Activated CD4-positive, alpha-beta T cell treated with anti-CD3 and anti-CD28 coated beads, Interleukin-2, amount 10 ng/mL, durations not matched to agents 24 days and 14 days (primary cell): ENCODE measurements at regions of chr3 and their contacts with region 1.

Region 1: DNA sequence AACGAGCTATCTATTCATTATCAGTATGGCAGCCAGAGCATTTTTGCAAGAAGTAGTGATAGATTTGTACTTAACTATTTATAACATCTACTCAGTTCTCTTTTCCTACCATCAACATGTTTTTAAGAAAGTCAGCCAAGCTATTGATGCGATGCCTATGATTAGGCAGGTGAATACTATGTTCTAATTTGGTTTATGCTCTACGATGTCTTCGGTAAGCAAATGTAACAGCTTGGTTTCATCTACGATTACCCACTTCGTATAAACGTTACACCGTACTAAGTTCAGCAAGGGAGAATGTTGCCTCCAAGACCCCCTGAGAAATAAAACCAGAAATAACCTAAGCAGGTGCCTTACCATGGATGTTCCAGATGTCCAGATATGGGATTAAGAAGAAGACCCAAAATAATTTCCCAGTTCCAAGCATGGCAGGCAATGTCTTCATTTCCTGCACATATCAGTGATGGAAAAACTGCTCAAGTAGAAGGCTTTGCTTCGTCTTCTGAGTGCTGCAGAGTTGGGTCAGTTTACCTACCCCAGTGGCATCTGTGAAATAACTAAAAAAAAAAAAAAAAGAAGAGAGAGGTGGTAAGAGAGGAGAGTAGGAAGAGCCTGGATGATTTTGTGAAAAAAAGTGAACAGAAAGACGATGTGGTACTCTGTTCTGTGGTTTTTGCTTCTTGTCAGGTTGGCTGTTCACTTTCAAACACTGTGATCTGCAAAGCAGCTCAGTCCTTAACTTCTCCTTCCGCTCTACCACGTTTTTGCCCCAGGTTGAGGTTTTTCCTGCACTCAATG is at the start of gene BTLA:
- DNase-seq: peak; percentile 81
- H3K4me3 Mint-ChIP-seq: peak within 1 kb of the TSS; percentile 97
- H3K27ac Mint-ChIP-seq: peak within 1 kb of the TSS; percentile 94
- H3K4me1 Mint-ChIP-seq: peaks cover 50% of the 10 kb centered on the region
- H3K27me3 Mint-ChIP-seq: no peaks in the 10 kb centered on the region
- total RNA-seq, gene BTLA: 33.7 and 36.0 TPM in 2 replicates

Region 2: GRCh38 chr3:112333002-112333380 is 166.1 kb before region 1 on chr3 and contains the start of gene CD200:
- intact Hi-C with region 1: loop called (anchors 1 kb)
- DNase-seq: peak; percentile 87
- H3K4me3 Mint-ChIP-seq: peak within 1 kb of the TSS; percentile 90
- H3K27ac Mint-ChIP-seq: peak within 1 kb of the TSS; percentile 84
- H3K4me1 Mint-ChIP-seq: peaks cover 44% of the 10 kb centered on the region
- H3K27me3 Mint-ChIP-seq: no peaks in the 10 kb centered on the region
- total RNA-seq, gene CD200: 144 and 151 TPM in 2 replicates

Region 3: GRCh38 chr3:112390783-112391641 is 108.1 kb before region 1 on chr3:
- intact Hi-C with region 1: no loop called
- DNase-seq: peak; percentile 73
- H3K4me3 Mint-ChIP-seq: peak overlapping the region; percentile 36
- H3K27ac Mint-ChIP-seq: peak overlapping the region; percentile 79
- H3K4me1 Mint-ChIP-seq: peaks cover 44% of the 10 kb centered on the region
- H3K27me3 Mint-ChIP-seq: no peaks in the 10 kb centered on the region

Region 4: DNA sequence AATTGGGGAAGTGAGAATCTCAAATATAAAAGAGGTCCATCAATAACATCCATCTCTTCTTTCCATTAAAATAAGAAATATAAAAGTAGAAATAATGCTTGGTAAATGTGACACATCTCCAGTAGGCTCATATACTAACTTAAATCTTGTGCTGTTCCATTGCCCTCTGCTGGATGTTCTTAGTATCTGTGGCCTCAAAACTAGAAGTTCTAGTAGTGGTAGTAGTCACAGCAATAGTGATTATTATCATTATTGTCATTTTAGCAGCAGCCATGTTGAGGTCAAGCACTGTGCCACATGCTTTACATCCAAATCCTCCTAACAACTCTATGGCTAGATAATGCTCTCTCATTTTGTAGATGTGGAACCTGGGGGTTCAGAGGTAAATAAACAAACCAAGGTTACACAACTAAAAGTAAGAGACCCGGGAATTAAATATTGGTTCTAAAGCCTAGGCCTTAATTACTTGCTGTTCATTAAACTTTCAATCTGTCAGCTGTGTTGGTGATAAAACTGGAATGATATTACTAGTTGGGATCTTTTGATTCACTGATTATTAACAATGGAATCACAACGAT is 20.4 kb after region 1 on chr3:
- intact Hi-C with region 1: loop called (anchors 1 kb)
- DNase-seq: peak; percentile 83
- H3K4me3 Mint-ChIP-seq: no peak overlapping the region
- H3K27ac Mint-ChIP-seq: no peak overlapping the region
- H3K4me1 Mint-ChIP-seq: peaks cover 20% of the 10 kb centered on the region
- H3K27me3 Mint-ChIP-seq: no peaks in the 10 kb centered on the region

Region 5: DNA sequence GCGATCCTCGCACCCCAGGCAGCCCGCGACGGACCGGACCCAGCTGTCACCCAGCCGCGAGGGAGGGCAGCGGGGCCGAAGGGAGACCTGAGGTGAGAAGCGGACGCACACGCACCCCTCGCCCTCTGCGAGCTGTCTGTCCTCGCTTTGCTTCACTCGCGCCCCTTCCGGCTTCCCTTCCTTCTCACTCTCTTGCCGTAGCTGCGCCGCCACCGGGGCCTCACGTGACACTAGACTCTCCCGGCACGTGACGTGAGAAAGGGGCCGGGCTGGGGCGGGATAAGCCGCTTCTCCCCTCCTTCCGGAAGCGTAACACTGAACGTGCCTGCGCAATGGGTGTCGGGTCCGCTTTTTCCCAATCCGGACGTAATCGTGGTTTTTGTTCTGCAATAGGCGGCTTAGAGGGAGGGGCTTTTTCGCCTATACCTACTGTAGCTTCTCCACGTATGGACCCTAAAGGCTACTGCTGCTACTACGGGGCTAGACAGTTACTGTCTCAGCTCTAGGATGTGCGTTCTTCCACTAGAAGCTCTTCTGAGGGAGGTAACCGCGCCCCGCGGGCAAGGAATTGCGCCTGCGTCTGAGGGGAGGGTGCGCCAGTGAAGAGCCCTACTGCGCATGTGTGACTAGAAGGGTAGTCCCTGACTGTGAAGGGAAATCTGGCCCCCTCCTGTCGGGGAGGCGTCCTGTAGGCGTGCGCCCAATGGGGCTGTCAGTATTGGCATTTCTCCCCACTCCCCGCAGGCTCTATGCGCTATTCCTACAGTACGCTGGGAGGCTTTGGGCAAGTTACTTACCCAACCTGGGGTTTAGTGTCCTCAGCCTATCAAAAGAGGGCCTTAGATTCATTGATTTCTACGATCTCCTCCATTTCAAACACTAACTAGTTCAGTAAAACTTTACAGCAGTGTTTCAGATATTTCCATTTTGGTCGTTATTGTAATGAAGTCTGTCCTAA is 62.9 kb after region 1 on chr3 and contains the starts of genes ATG3 and SLC35A5:
- intact Hi-C with region 1: loop called (anchors 2 kb)
- DNase-seq: peak; percentile 100
- H3K4me3 Mint-ChIP-seq: peak within 1 kb of the TSS; percentile 98
- H3K27ac Mint-ChIP-seq: peak within 1 kb of the TSS; percentile 99
- H3K4me1 Mint-ChIP-seq: peaks cover 24% of the 10 kb centered on the region
- H3K27me3 Mint-ChIP-seq: no peaks in the 10 kb centered on the region
- total RNA-seq, gene ATG3: 66.9 and 69.1 TPM in 2 replicates
- total RNA-seq, gene SLC35A5: 15.5 and 16.3 TPM in 2 replicates